ENCODE measurements at regions of chr16 and their contacts with region 1.

Region 1: DNA sequence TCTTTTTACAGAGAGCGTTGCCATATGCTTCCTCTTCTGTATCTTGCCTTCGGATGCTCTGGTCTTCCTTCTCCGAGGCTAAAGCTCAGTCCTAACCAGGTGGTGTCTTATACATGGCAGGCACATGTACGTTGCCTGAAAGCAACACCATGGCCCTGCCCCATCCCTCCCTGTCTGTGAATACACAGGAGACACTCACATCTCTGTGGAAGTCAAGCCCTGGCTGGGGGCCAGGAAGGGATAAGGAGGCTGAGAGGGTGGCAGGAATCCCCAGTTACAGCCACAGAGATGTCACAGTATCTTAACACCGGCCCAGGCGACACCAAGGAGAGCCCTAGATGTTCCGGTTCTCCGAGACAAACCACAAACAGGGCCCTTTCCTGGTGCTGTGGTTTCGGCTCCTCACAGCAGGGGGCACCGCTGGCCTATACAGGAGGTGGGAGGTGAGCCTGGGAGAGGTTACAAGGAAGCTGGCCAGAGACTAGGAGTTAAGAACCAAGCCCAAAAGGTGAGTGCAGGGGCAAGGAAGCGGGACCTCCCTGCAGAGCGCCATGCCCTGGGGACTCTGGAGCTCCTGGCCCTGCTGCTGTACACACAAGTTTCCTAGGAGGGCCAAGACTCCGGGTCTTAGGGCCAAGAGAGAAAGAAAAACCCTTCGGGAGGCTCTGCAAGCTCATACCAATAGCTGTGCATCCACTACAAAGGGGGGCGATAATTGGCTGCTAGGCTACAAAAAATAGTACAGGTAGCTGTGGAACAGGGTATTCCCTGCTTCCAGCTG is 41.7 kb downstream of the SRL start:
- DNase-seq: no peak
- H3K4me3 ChIP-seq: no peak overlapping the region
- CTCF ChIP-seq: peak; percentile 80

Region 2: GRCh38 chr16:3983081-3983520 is 217.1 kb before region 1 on chr16:
- CTCF ChIA-PET with region 1: interaction called, 12 read pairs
- POLR2A ChIA-PET with region 1: no interaction called
- DNase-seq: no peak
- H3K4me3 ChIP-seq: no peak overlapping the region
- CTCF ChIP-seq: peak; percentile 89

Region 3: GRCh38 chr16:4232541-4233386 is 32.6 kb after region 1 on chr16:
- CTCF ChIA-PET with region 1: interaction called, 10 read pairs
- POLR2A ChIA-PET with region 1: no interaction called
- DNase-seq: no peak
- H3K4me3 ChIP-seq: no peak overlapping the region
- CTCF ChIP-seq: no peak

Measured in AG04449 (cell line).